ENCODE measurements at regions of chr12 and their contacts with region 1.

Region 1: DNA sequence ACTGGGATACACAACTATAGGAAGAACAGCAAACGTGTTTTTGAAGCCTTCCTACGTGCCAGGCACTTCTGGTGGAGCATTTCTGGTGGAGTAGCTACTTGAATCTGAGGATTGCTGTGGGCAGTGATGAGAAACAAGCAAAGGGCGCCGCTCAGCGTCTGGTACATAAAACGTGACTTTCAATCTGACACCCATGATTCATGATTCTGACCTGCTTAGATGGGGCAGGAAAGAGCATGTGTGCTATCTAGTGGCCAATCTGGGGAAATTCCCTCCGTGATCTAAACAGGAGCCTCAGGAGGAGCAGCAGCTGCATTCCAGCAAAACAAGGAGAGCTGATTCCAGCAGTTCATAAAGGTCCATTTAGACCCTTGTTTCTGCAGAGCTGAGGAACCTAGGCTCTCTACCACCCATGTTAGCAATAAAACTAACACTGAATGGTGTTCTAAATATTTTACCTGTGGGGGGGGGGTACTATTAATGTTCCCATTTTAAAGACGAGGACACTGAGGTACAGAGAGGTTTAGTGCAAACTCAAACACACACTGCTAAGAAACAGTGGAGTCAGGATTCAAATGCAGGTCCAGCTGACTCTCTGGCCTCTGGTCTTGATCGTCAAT is 37.8 kb downstream of the PAH start:
- DNase-seq: peak; percentile 47
- H3K4me3 Mint-ChIP-seq: no peak overlapping the region
- H3K27ac Mint-ChIP-seq: no peak overlapping the region
- H3K4me1 Mint-ChIP-seq: no peaks in the 10 kb centered on the region
- H3K27me3 Mint-ChIP-seq: peaks cover 11% of the 10 kb centered on the region

Region 2: GRCh38 chr12:102891756-102892155 is 12.5 kb after region 1 on chr12:
- CTCF ChIA-PET with region 1: interaction called, 12 read pairs
- POLR2A ChIA-PET with region 1: no interaction called
- intact Hi-C with region 1: no loop called
- DNase-seq: no peak
- H3K4me3 Mint-ChIP-seq: no peak overlapping the region
- H3K27ac Mint-ChIP-seq: no peak overlapping the region
- H3K4me1 Mint-ChIP-seq: no peaks in the 10 kb centered on the region
- H3K27me3 Mint-ChIP-seq: peaks cover under 1% of the 10 kb centered on the region